Body of pancreas (tissue), 4 donors: ENCODE measurements at regions of chr15 and their contacts with region 1.

Region 1: GRCh38 chr15:45429974-45430792 is 51.8 kb upstream of the GATM start:
- DNase-seq: peak; percentile 75 to 85 (median 80)
- ATAC-seq: peak; percentile 87
- H3K4me3 ChIP-seq: peak overlapping the region; percentile 12 to 22
- H3K27ac ChIP-seq: peak overlapping the region in 1 of 4 donors; percentile 6
- H3K4me1 ChIP-seq: peaks cover 16% of the 10 kb centered on the region
- H3K27me3 ChIP-seq: no peaks in the 10 kb centered on the region
- CTCF ChIP-seq: peak; percentile 99 to 100 (median 99)
- POLR2A ChIP-seq: peak in 1 of 3 donors; percentile 20

Region 2: GRCh38 chr15:45307230-45307924 is 122.8 kb before region 1 on chr15:
- intact Hi-C with region 1: no loop called
- DNase-seq: peak in 1 of 4 donors; percentile 32
- ATAC-seq: peak; percentile 79
- H3K4me3 ChIP-seq: no peak overlapping the region
- H3K27ac ChIP-seq: peak overlapping the region in 3 of 4 donors; percentile 22 to 58 (median 45)
- H3K4me1 ChIP-seq: peaks cover 47% of the 10 kb centered on the region
- H3K27me3 ChIP-seq: no peaks in the 10 kb centered on the region
- CTCF ChIP-seq: peak; percentile 37 to 86 (median 79)
- POLR2A ChIP-seq: no peak

Region 3: GRCh38 chr15:45457641-45458433 is 27.7 kb after region 1 on chr15:
- intact Hi-C with region 1: loop called (anchors 5 kb)
- DNase-seq: peak; percentile 78 to 87 (median 82)
- ATAC-seq: peak; percentile 84
- H3K4me3 ChIP-seq: peak overlapping the region; percentile 1 to 10
- H3K27ac ChIP-seq: peak overlapping the region; percentile 59 to 70 (median 68)
- H3K4me1 ChIP-seq: peaks cover 8% of the 10 kb centered on the region
- H3K27me3 ChIP-seq: no peaks in the 10 kb centered on the region
- CTCF ChIP-seq: peak; percentile 54 to 88 (median 82)
- POLR2A ChIP-seq: peak in 1 of 3 donors; percentile 16

Region 4: DNA sequence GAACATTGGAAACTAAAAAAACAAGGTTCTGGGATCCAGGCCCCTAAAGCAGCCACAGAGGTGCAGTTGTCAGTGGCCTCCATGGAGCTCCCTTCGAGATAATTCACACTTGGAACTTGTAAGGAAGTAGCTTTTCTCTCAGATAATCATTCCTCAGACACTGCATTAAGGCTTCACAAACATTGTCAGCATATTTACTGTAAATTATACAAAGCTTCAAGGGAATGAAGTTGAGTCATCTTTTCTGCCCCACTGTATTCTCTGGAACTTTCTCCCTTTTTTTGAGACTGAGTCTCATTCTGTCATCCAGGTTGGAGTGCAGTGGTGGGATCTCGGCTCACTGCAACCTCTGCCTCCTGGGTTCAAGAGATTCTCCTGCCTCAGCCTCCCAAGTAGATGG is 164.1 kb after region 1 on chr15:
- intact Hi-C with region 1: no loop called
- DNase-seq: no peak
- ATAC-seq: no peak
- H3K4me3 ChIP-seq: no peak overlapping the region
- H3K27ac ChIP-seq: no peak overlapping the region
- H3K4me1 ChIP-seq: peaks cover 10% of the 10 kb centered on the region
- H3K27me3 ChIP-seq: no peaks in the 10 kb centered on the region
- CTCF ChIP-seq: no peak
- POLR2A ChIP-seq: no peak

Region 5: GRCh38 chr15:45611305-45611704 is 181.1 kb after region 1 on chr15:
- intact Hi-C with region 1: loop called (anchors 10 kb)
- DNase-seq: no peak
- ATAC-seq: no peak
- H3K4me3 ChIP-seq: no peak overlapping the region
- H3K27ac ChIP-seq: no peak overlapping the region
- H3K4me1 ChIP-seq: no peaks in the 10 kb centered on the region
- H3K27me3 ChIP-seq: no peaks in the 10 kb centered on the region
- CTCF ChIP-seq: peak in 3 of 7 experiments; percentile 30 to 32 (median 31)
- POLR2A ChIP-seq: no peak